ENCODE measurements at regions of chr20 and their contacts with region 1.

Region 1: GRCh38 chr20:44196271-44196670 is 9.3 kb upstream of the JPH2 start:
- DNase-seq: no peak
- ATAC-seq: peak; percentile 37; the same call in 2 of the 3 replicates
- H3K4me3 ChIP-seq: no peak overlapping the region
- H3K27ac ChIP-seq: no peak overlapping the region
- H3K4me1 ChIP-seq: no peaks in the 10 kb centered on the region
- H3K27me3 ChIP-seq: no peaks in the 10 kb centered on the region
- CTCF ChIP-seq: peak in 1 of 3 experiments; percentile 15; a peak in 2 of 6 replicates
- EP300 ChIP-seq: no peak
- POLR2A ChIP-seq: no peak
- RAD21 ChIP-seq: no peak

Region 2: GRCh38 chr20:43448748-43449535 is 747.3 kb before region 1 on chr20:
- CTCF ChIA-PET with region 1: no interaction called
- POLR2A ChIA-PET with region 1: no interaction called
- RAD21 ChIA-PET with region 1: no interaction called
- SMC1A ChIA-PET with region 1: interaction called, 7 read pairs
- in situ Hi-C with region 1: loop called (anchors 5 kb)
- intact Hi-C with region 1: no loop called
- DNase-seq: peak; percentile 13
- ATAC-seq: peak; percentile 89
- H3K4me3 ChIP-seq: no peak overlapping the region
- H3K27ac ChIP-seq: no peak overlapping the region
- H3K4me1 ChIP-seq: no peaks in the 10 kb centered on the region
- H3K27me3 ChIP-seq: no peaks in the 10 kb centered on the region
- CTCF ChIP-seq: peak; percentile 74 to 87 (median 77)
- EP300 ChIP-seq: no peak
- POLR2A ChIP-seq: no peak
- RAD21 ChIP-seq: peak; percentile 90

Region 3: DNA sequence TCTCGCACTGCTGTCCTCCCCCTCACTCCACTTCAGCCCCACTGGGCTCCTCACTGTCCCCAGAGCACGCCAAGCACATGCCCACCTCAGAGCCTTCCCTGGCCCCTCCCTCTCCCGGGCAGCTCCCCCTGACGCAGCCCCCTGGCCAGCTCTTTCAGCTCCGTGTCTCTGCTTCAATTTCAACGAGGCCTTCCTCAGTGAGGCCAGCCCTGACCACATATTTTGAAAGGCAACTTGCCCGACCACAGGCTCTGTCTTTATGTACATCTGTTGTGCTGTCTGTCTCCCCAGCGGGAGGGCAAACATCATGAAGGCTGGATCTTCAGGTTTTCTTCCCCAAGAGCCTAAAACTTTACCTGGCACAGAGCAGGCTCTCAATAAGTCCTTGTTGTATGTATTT is 53.9 kb before region 1 on chr20:
- CTCF ChIA-PET with region 1: no interaction called
- POLR2A ChIA-PET with region 1: no interaction called
- RAD21 ChIA-PET with region 1: no interaction called
- SMC1A ChIA-PET with region 1: no interaction called
- in situ Hi-C with region 1: no loop called
- intact Hi-C with region 1: no loop called
- DNase-seq: no peak
- ATAC-seq: no peak
- H3K4me3 ChIP-seq: no peak overlapping the region
- H3K27ac ChIP-seq: no peak overlapping the region
- H3K4me1 ChIP-seq: no peaks in the 10 kb centered on the region
- H3K27me3 ChIP-seq: peaks cover 1 to 6% of the 10 kb centered on the region in 2 experiments; a peak in 3 of 4 replicates
- CTCF ChIP-seq: no peak
- EP300 ChIP-seq: no peak
- POLR2A ChIP-seq: no peak
- RAD21 ChIP-seq: no peak

Region 4: GRCh38 chr20:44210422-44211176 is 14.3 kb after region 1 on chr20 and contains the start of gene OSER1:
- CTCF ChIA-PET with region 1: interaction called, 17 read pairs
- POLR2A ChIA-PET with region 1: no interaction called
- RAD21 ChIA-PET with region 1: no interaction called
- SMC1A ChIA-PET with region 1: interaction called, 5 read pairs
- in situ Hi-C with region 1: no loop called
- intact Hi-C with region 1: no loop called
- DNase-seq: peak; percentile 88
- ATAC-seq: peak; percentile 88
- H3K4me3 ChIP-seq: peak within 1 kb of the TSS; percentile 98
- H3K27ac ChIP-seq: peak within 1 kb of the TSS; percentile 89
- H3K4me1 ChIP-seq: peaks cover 4% of the 10 kb centered on the region; the same call in 1 of the 2 replicates
- H3K27me3 ChIP-seq: no peaks in the 10 kb centered on the region
- CTCF ChIP-seq: no peak
- EP300 ChIP-seq: 0 out of 4 replicates have a peak, but pooled peaks have one; percentile 27 to 44
- POLR2A ChIP-seq: peak; percentile 80
- RAD21 ChIP-seq: no peak
- polyA plus RNA-seq, gene OSER1: 50.3 to 63.8 TPM